Right lobe of liver (tissue), 6 donors: ENCODE measurements at regions of chr7 and their contacts with region 1.

Region 1: GRCh38 chr7:26278770-26279169 is 12.9 kb upstream of the SNX10 start:
- DNase-seq: no peak
- ATAC-seq: peak; percentile 84 to 96 (median 88)
- H3K4me3 ChIP-seq: no peak overlapping the region
- H3K27ac ChIP-seq: no peak overlapping the region
- H3K4me1 ChIP-seq: no peaks in the 10 kb centered on the region
- H3K27me3 ChIP-seq: no peaks in the 10 kb centered on the region
- CTCF ChIP-seq: peak; percentile 52 to 59 (median 56)
- POLR2A ChIP-seq: no peak

Region 2: DNA sequence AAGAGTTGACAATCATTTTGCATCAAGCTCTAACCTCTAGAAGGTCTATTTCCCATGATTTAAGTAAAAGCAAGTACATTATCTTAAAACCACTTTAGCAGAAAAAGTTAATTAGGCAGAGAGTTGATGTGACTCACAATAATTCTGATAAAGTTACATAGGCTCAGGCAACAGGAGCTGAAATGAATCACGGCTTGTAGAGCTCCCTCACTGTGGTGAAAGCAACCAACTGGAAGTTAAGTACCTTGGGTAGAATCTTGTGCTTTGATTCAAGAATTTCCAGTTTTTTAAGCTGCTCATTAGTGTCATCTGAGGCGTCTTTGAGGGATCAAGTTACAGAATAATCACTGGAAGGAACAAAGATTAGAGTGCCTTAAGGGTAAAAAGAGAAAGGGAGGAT is 195.7 kb before region 1 on chr7:
- intact Hi-C with region 1: loop called in 1 of 2 experiments (anchors 10 kb)
- DNase-seq: no peak
- ATAC-seq: no peak
- H3K4me3 ChIP-seq: no peak overlapping the region
- H3K27ac ChIP-seq: no peak overlapping the region
- H3K4me1 ChIP-seq: no peaks in the 10 kb centered on the region
- H3K27me3 ChIP-seq: no peaks in the 10 kb centered on the region
- CTCF ChIP-seq: no peak
- POLR2A ChIP-seq: no peak